Left colon (tissue), 2 donors: ENCODE measurements at regions of chr12 and their contacts with region 1.

Region 1: DNA sequence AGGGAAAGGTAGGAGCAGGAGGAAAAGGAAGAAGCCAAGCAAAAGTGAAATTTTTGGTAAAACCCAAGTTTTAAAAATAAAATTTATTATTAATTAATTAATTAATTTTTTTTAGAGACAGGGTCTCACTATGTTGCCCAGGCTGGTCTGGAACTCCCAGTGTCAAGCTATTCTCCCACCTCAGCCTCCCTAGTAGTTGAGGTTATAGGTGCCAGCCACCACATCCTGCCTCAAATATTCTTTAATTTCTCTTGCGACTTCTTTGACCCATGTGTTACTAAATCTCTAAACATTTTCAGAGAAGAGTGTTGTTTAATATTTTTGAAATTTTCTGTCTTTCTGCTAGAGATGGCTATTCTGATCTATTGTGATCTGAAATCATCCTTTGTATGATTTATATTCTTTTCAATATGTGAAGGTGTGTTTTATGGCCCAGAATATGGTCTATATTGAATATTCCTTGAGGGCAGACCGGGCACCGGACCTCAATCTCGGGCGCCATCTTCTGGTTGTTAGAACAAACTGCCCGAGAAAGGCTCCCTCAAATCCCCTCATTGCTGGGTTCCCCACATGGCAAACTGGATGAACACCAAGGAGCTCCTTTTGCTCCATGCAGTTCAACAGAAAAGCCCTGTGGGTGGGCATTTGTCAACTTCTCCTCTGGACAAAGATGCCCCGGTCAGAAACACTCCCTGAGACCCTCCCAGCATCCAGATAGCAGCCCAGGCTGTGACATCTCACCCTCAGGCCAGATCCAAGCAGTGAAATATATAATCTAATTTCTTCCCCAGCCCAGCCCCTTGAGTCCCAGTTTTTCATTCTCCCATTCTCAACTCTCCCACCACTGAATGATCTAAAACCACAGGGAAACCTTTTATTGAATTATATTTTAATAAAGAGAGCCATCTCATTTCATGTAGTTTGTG is 110.5 kb downstream of the ASCL4 start:
- DNase-seq: peak in 1 of 2 donors; percentile 54
- ATAC-seq: peak; percentile 85

Region 2: GRCh38 chr12:107474639-107475539 is 410.1 kb before region 1 on chr12:
- intact Hi-C with region 1: no loop called
- DNase-seq: no peak
- ATAC-seq: no peak

Region 3: GRCh38 chr12:107670999-107671643 is 213.9 kb before region 1 on chr12:
- intact Hi-C with region 1: loop called (anchors 5 to 10 kb)
- DNase-seq: peak in 1 of 2 donors; percentile 26
- ATAC-seq: peak; percentile 61

Region 4: DNA sequence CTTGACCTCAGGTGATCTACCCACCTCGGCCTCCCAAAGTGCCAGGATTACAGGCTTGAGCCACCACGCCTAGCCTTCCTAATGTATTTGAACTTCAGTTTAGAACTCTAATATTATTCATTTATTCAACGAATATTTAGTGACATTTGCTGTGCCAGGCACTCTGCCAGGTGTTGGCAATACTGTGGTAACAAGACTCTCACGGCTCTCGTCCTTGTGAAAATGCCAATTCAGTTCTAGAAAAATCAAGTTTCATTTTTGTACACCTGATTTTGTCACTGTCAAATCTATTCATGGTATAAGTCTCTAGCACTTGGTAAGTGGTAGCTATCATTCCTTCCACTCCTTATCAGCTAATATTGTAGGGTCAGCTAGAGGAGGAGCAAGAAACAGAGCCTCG is 205.7 kb before region 1 on chr12:
- intact Hi-C with region 1: loop called (anchors 5 to 10 kb)
- DNase-seq: no peak
- ATAC-seq: no peak

Region 5: DNA sequence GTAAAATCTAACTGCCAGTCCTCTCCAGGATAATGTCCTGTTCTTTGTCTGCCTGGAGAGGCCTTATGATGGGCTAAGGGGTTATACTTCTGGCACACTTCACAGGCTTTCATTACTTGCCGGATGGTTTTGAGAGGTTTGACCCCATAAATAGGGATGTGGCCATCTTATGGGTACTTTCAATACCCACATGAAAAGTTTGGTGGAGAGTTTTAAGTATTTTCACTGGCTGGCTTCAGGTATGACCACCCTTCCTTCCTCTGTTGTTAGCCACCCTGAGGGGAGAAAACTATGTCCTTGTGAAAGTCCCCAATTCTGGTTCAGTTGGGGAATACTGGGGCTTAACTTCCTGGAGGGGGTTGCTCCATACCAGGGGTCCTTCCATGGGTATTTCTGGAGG is 55.8 kb before region 1 on chr12:
- intact Hi-C with region 1: no loop called
- DNase-seq: no peak
- ATAC-seq: no peak